ENCODE measurements at regions of chr9 and their contacts with region 1.

Region 1: GRCh38 chr9:75238311-75238978 is 150.1 kb downstream of the OSTF1 start:
- DNase-seq: peak; percentile 81
- H3K4me3 Mint-ChIP-seq: no peak overlapping the region
- H3K27ac Mint-ChIP-seq: no peak overlapping the region
- H3K4me1 Mint-ChIP-seq: no peaks in the 10 kb centered on the region
- H3K27me3 Mint-ChIP-seq: no peaks in the 10 kb centered on the region

Region 2: DNA sequence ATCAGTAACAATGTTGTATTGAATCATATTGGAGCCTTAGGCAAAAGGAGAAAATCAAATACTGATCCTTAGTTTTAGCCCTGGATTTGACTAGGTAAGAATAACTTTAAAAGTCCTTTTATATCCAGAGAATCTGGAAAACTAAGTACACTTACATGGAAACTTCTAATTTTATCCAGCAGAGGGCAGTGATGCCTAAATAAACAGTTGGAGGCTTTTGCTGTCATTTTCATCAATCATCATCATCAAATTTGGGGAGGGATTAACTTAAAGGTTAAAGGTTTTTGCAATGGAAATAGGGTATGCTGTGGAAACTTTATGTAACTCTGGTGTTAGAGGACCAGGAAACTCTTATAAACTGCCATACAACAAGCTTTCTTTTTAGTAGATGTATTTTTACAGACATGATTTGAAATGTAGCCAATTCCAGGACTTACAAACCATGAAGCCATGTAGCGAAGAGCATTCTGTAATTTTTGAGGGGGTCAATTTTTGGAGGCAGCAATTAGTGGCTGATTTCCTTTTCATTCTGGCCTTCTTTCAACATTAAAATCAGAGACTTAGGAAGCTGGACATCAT is 37.5 kb before region 1 on chr9:
- intact Hi-C with region 1: loop called (anchors 1 kb)
- DNase-seq: peak; percentile 74
- H3K4me3 Mint-ChIP-seq: no peak overlapping the region
- H3K27ac Mint-ChIP-seq: no peak overlapping the region
- H3K4me1 Mint-ChIP-seq: peaks cover 2% of the 10 kb centered on the region
- H3K27me3 Mint-ChIP-seq: peaks cover 2% of the 10 kb centered on the region

Region 3: GRCh38 chr9:75438716-75439115 is 200.3 kb after region 1 on chr9:
- intact Hi-C with region 1: no loop called
- DNase-seq: no peak
- H3K4me3 Mint-ChIP-seq: no peak overlapping the region
- H3K27ac Mint-ChIP-seq: no peak overlapping the region
- H3K4me1 Mint-ChIP-seq: no peaks in the 10 kb centered on the region
- H3K27me3 Mint-ChIP-seq: peaks cover 6% of the 10 kb centered on the region